ENCODE measurements at regions of chr13 and their contacts with region 1.

Region 1: GRCh38 chr13:38743466-38743865 is 56.6 kb downstream of the FREM2 start:
- DNase-seq: no peak
- H3K4me3 ChIP-seq: no peak overlapping the region
- H3K27ac ChIP-seq: no peak overlapping the region
- H3K4me1 ChIP-seq: no peaks in the 10 kb centered on the region
- H3K27me3 ChIP-seq: no peaks in the 10 kb centered on the region
- CTCF ChIP-seq: no peak

Region 2: DNA sequence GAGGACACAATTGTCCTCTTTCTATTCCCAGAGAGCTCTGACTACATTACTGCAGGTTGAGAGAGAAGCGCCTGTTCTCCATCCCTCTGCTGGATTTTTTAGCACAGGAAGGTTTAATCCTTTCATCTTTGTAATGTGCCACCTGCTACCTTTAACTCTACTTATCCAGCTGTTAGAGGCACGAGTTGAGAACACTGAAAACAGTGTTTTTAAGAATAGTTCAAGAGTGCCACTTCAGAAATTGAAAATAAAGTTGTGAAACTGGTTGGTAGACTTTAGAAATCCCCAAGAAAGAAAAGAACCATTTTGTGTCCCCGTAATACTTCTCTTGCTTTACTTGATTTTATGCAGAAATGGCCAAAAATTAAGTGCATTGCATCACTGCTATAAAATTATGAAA is 36.0 kb before region 1 on chr13:
- CTCF ChIA-PET with region 1: interaction called, 11 read pairs
- POLR2A ChIA-PET with region 1: no interaction called
- intact Hi-C with region 1: no loop called
- DNase-seq: no peak
- H3K4me3 ChIP-seq: no peak overlapping the region
- H3K27ac ChIP-seq: no peak overlapping the region
- H3K4me1 ChIP-seq: no peaks in the 10 kb centered on the region
- H3K27me3 ChIP-seq: no peaks in the 10 kb centered on the region
- CTCF ChIP-seq: no peak

Measured in PC-9 (cell line).